PC-3 (cell line): ENCODE measurements at regions of chr5 and their contacts with region 1.

Region 1: DNA sequence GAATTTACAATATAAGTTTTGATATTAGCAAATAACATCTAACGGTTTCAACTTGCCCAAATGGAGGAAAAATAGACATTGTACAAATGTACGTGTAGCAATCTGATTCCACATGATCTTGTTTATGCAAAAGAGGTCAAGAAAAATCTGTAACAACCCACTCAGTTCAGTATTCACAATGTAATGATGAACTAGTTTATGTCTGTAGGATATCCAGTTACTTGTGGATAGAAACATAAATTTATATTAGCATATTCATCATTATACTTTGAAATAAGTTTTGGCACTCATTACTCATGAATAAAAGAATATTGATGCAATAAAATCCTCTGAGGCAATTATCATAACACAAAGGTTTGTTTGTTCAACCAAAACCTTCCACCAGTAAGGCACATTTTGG is 28.1 kb downstream of the PLK2 start:
- DNase-seq: no peak
- ATAC-seq: no peak
- H3K4me3 ChIP-seq: no peak overlapping the region
- H3K27ac ChIP-seq: no peak overlapping the region
- H3K4me1 ChIP-seq: no peaks in the 10 kb centered on the region
- H3K27me3 ChIP-seq: no peaks in the 10 kb centered on the region
- CTCF ChIP-seq: no peak

Region 2: GRCh38 chr5:56565644-56566043 is 1866.2 kb before region 1 on chr5:
- CTCF ChIA-PET with region 1: no interaction called
- POLR2A ChIA-PET with region 1: interaction called, 35 read pairs
- intact Hi-C with region 1: no loop called
- DNase-seq: no peak
- ATAC-seq: no peak
- H3K4me3 ChIP-seq: no peak overlapping the region
- H3K27ac ChIP-seq: no peak overlapping the region
- H3K4me1 ChIP-seq: no peaks in the 10 kb centered on the region
- H3K27me3 ChIP-seq: no peaks in the 10 kb centered on the region
- CTCF ChIP-seq: no peak

Region 3: GRCh38 chr5:58629271-58630159 is 197.7 kb after region 1 on chr5:
- CTCF ChIA-PET with region 1: no interaction called
- POLR2A ChIA-PET with region 1: no interaction called
- intact Hi-C with region 1: no loop called
- DNase-seq: no peak
- ATAC-seq: no peak
- H3K4me3 ChIP-seq: no peak overlapping the region
- H3K27ac ChIP-seq: no peak overlapping the region
- H3K4me1 ChIP-seq: no peaks in the 10 kb centered on the region
- H3K27me3 ChIP-seq: peaks cover 30% of the 10 kb centered on the region
- CTCF ChIP-seq: no peak